ENCODE measurements at regions of chr13 and their contacts with region 1.

Region 1: GRCh38 chr13:44917589-44918325 is 71.5 kb downstream of the NUFIP1 start:
- DNase-seq: peak; percentile 99
- ATAC-seq: peak; percentile 74
- H3K4me3 ChIP-seq: peak overlapping the region; percentile 68 to 89 (median 76)
- H3K4me3 Mint-ChIP-seq: no peak overlapping the region
- H3K27ac ChIP-seq: peak overlapping the region; percentile 83 to 88
- H3K27ac Mint-ChIP-seq: no peak overlapping the region
- H3K4me1 ChIP-seq: peaks cover 9% of the 10 kb centered on the region in 2 donors
- H3K4me1 Mint-ChIP-seq: peaks cover 5% of the 10 kb centered on the region
- H3K27me3 ChIP-seq: no peaks in the 10 kb centered on the region
- H3K27me3 Mint-ChIP-seq: no peaks in the 10 kb centered on the region
- CTCF ChIP-seq: peak; percentile 44

Region 2: GRCh38 chr13:43878892-43879754 is 1038.6 kb before region 1 on chr13 and contains the start of gene CCDC122:
- CTCF ChIA-PET with region 1: interaction called, 3 read pairs
- POLR2A ChIA-PET with region 1: interaction called, 3 read pairs
- intact Hi-C with region 1: loop called (anchors 5 kb)
- DNase-seq: peak; percentile 89
- ATAC-seq: peak; percentile 79
- H3K4me3 ChIP-seq: peak within 1 kb of the TSS; percentile 36 to 78 (median 75)
- H3K4me3 Mint-ChIP-seq: peak within 1 kb of the TSS; percentile 88
- H3K27ac ChIP-seq: peak within 1 kb of the TSS; percentile 76 to 92
- H3K27ac Mint-ChIP-seq: peak within 1 kb of the TSS; percentile 94
- H3K4me1 ChIP-seq: peaks cover 20 to 22% of the 10 kb centered on the region in 2 donors
- H3K4me1 Mint-ChIP-seq: peaks cover 31% of the 10 kb centered on the region
- H3K27me3 ChIP-seq: no peaks in the 10 kb centered on the region
- H3K27me3 Mint-ChIP-seq: no peaks in the 10 kb centered on the region
- CTCF ChIP-seq: no peak
- total RNA-seq, gene CCDC122: 10.7 and 12.1 TPM in 2 replicates

Region 3: GRCh38 chr13:44435142-44435982 is 482.4 kb before region 1 on chr13:
- CTCF ChIA-PET with region 1: no interaction called
- POLR2A ChIA-PET with region 1: no interaction called
- intact Hi-C with region 1: loop called (anchors 1 kb)
- DNase-seq: peak; percentile 94
- ATAC-seq: peak; percentile 91
- H3K4me3 ChIP-seq: peak overlapping the region; percentile 52 to 90 (median 71)
- H3K4me3 Mint-ChIP-seq: peak overlapping the region; percentile 89
- H3K27ac ChIP-seq: peak overlapping the region; percentile 69 to 81
- H3K27ac Mint-ChIP-seq: peak overlapping the region; percentile 84
- H3K4me1 ChIP-seq: peaks cover 22 to 30% of the 10 kb centered on the region in 2 donors
- H3K4me1 Mint-ChIP-seq: peaks cover 29% of the 10 kb centered on the region
- H3K27me3 ChIP-seq: peaks cover 0 to 16% (median 0%) of the 10 kb centered on the region in 4 experiments
- H3K27me3 Mint-ChIP-seq: peaks cover 11% of the 10 kb centered on the region
- CTCF ChIP-seq: no peak

Region 4: DNA sequence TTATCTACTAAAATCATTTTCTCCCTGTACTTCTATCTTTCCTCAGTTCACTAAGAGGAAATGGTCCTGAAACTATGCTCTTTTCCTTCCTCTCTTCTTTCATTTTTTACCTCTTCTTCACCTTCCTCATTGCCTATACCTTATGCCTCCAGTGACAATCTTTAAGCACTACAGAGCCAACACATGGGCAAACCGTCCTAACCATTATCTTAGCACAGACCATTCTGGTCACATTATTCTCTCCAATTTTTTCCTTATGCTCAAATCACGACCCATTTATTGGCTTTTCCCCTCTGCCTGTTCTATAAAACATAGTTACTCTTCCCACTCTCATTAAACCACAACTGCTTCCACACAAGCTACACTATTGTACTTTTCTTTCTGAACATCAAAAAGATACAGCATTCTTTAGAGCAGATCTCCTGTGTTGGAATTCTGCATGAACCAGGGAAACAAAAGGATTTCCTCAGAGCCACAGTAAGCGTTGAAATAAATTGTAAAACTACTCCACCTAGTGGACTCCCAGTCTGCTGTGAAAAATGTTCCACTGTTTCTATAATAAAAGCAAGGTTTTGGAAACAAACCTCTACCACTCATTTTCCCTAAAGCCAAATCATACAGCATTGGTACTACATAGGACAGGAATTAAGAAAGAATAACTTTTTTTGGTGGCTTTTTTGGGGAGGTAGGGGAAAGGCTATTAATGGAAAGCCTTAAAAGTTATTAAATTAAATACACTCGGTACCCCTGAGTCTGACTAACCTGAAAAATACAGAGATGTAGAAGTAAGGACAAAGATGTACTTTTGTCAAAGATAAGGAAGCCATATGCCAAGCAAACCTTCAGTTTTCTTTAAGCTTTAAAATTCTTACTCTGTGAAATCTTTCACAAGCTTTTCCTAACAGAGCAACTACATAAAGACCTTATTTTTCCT is 52.1 kb after region 1 on chr13:
- CTCF ChIA-PET with region 1: interaction called, 7 read pairs
- POLR2A ChIA-PET with region 1: no interaction called
- intact Hi-C with region 1: loop called (anchors 2 kb)
- DNase-seq: peak; percentile 37
- ATAC-seq: no peak
- H3K4me3 ChIP-seq: no peak overlapping the region
- H3K4me3 Mint-ChIP-seq: no peak overlapping the region
- H3K27ac ChIP-seq: no peak overlapping the region
- H3K27ac Mint-ChIP-seq: no peak overlapping the region
- H3K4me1 ChIP-seq: peaks cover 9 to 16% of the 10 kb centered on the region in 2 donors
- H3K4me1 Mint-ChIP-seq: no peaks in the 10 kb centered on the region
- H3K27me3 ChIP-seq: no peaks in the 10 kb centered on the region
- H3K27me3 Mint-ChIP-seq: no peaks in the 10 kb centered on the region
- CTCF ChIP-seq: peak; percentile 75

Region 5: DNA sequence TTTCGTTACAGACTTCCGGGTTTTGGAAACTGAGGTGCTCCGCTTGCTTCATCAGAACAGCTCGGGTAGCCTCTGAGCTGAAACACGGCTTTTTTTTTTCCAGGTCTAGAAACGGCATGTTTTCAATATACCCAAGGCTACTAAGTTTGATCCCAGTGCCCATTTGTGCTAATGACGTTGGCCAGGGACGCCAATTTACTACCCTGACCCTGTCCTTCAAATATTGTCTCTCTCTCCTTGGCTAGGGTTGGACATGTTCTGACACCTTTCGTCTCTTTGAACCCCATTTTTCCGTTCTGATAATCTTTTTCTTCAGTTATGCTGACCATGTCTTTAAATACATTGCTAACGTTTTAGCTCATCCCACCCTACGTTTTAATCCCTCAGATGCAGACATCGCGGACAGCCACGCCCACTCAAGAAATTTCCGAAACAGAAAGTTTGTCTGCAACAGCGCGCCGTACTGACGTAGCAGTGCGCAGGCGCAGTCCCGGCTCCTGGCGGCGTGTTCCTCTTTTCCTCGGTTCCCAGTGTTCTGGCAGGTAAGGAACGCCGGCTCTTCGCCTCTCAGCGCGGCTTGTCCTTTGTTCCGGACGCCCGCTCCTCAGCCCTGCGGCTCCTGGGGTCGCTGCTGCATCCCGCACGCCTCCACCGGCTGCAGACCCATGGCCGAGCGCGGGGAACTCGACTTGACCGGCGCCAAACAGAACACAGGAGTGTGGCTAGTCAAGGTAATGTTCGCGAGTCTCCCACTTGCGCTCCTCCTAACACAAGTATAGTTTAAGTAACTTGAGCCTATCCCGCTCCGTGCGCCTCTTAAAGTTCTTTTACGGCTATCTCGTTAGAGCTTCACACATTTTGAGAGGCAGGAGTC is 202.5 kb after region 1 on chr13 and contains the start of gene GTF2F2:
- CTCF ChIA-PET with region 1: no interaction called
- POLR2A ChIA-PET with region 1: no interaction called
- intact Hi-C with region 1: loop called (anchors 1 kb)
- DNase-seq: peak; percentile 94
- ATAC-seq: peak; percentile 81
- H3K4me3 ChIP-seq: peak within 1 kb of the TSS; percentile 68 to 100 (median 92)
- H3K4me3 Mint-ChIP-seq: no peak within 1 kb of the TSS
- H3K27ac ChIP-seq: peak within 1 kb of the TSS; percentile 66 to 93
- H3K27ac Mint-ChIP-seq: no peak within 1 kb of the TSS
- H3K4me1 ChIP-seq: peaks cover 20 to 21% of the 10 kb centered on the region in 2 donors
- H3K4me1 Mint-ChIP-seq: peaks cover 7% of the 10 kb centered on the region
- H3K27me3 ChIP-seq: no peaks in the 10 kb centered on the region
- H3K27me3 Mint-ChIP-seq: no peaks in the 10 kb centered on the region
- CTCF ChIP-seq: no peak
- total RNA-seq, gene GTF2F2: 19.6 and 23.6 TPM in 2 replicates

Region 6: GRCh38 chr13:46052319-46053161 is 1134.8 kb after region 1 on chr13 and contains the start of gene ZC3H13:
- CTCF ChIA-PET with region 1: no interaction called
- POLR2A ChIA-PET with region 1: no interaction called
- intact Hi-C with region 1: loop called (anchors 5 kb)
- DNase-seq: peak; percentile 95
- ATAC-seq: peak; percentile 99
- H3K4me3 ChIP-seq: peak within 1 kb of the TSS; percentile 84 to 95 (median 88)
- H3K4me3 Mint-ChIP-seq: peak within 1 kb of the TSS; percentile 96
- H3K27ac ChIP-seq: peak within 1 kb of the TSS; percentile 89 to 96
- H3K27ac Mint-ChIP-seq: peak within 1 kb of the TSS; percentile 95
- H3K4me1 ChIP-seq: peaks cover 19 to 26% of the 10 kb centered on the region in 2 donors
- H3K4me1 Mint-ChIP-seq: peaks cover 33% of the 10 kb centered on the region
- H3K27me3 ChIP-seq: peaks cover 0 to 3% (median 0%) of the 10 kb centered on the region in 4 experiments
- H3K27me3 Mint-ChIP-seq: peaks cover 6% of the 10 kb centered on the region
- CTCF ChIP-seq: peak; percentile 65
- total RNA-seq, gene ZC3H13: 61.9 and 65.7 TPM in 2 replicates

Measured in B cell (primary cell).